Stomach (tissue), 19 donors: ENCODE measurements at regions of chr13 and their contacts with region 1.

Region 1: GRCh38 chr13:77429320-77430142 is 102.6 kb upstream of the MYCBP2 start:
- DNase-seq: no peak
- H3K4me3 ChIP-seq: no peak overlapping the region
- H3K27ac ChIP-seq: peak overlapping the region in 1 of 5 donors; percentile 4
- H3K4me1 ChIP-seq: no peaks in the 10 kb centered on the region
- H3K27me3 ChIP-seq: no peaks in the 10 kb centered on the region
- CTCF ChIP-seq: no peak
- EP300 ChIP-seq: no peak
- POLR2A ChIP-seq: no peak

Region 2: DNA sequence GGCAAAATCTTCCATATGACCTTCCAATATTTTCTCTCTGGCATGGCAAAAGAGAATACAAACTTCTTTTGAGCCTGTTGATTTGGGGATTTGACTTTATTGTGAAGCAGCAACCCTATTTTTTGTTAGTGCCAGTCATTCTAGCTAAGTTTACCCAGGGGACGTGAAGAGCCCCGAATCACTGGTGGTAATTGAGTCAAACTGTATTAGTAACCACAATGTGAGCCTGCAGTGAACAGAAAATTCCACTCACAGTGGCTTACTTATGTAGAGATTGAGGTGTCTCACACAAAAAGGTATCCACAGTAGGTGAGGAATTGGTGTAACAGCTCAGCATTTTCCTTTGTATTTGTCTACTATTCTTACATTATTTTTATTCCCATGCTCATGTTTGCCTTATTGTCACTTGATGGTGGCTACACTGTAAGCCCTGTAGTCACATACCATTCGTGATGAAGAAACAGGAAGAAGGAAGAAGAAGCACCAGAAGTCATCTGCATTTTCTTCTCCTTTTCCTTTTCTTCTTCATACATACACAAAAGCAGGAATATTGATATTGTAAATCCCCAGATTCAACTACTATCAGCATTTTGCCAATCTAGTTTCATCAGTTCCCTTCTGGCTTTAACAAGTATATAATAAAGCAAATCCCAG is 69.4 kb before region 1 on chr13:
- intact Hi-C with region 1: loop called (anchors 10 kb)
- DNase-seq: no peak
- H3K4me3 ChIP-seq: no peak overlapping the region
- H3K27ac ChIP-seq: no peak overlapping the region
- H3K4me1 ChIP-seq: no peaks in the 10 kb centered on the region
- H3K27me3 ChIP-seq: no peaks in the 10 kb centered on the region
- CTCF ChIP-seq: no peak
- EP300 ChIP-seq: no peak
- POLR2A ChIP-seq: no peak

Region 3: GRCh38 chr13:77878190-77878589 is 448.7 kb after region 1 on chr13:
- intact Hi-C with region 1: no loop called
- DNase-seq: no peak
- H3K4me3 ChIP-seq: no peak overlapping the region
- H3K27ac ChIP-seq: no peak overlapping the region
- H3K4me1 ChIP-seq: no peaks in the 10 kb centered on the region
- H3K27me3 ChIP-seq: peaks cover 0 to 2% (median 0%) of the 10 kb centered on the region in 3 donors
- CTCF ChIP-seq: no peak
- EP300 ChIP-seq: no peak
- POLR2A ChIP-seq: no peak